Head of caudate nucleus (tissue), 42 donors: ENCODE measurements at regions of chr7 and their contacts with region 1.

Region 1: GRCh38 chr7:71372991-71373390 is 241.0 kb downstream of the GALNT17 start:
- DNase-seq: no peak

Region 2: DNA sequence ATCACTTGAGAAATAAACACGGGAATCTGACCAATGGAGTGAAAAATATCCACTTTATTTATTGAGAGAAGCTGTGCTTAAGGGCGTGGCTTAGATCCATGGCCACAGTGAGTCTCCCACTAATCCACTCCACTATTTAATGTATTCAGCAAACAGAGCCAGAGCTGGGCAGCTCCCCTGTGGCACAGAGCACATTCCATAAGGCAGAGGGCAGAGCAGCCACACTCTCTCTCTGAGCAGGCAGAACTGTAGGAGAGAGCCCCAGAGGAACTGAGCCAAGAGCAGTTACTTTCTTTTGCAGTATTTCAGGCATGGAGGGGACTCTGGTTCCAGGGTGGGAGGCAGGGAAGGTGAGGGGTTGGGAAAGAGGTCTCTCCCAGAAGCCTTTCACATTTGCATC is 135.0 kb before region 1 on chr7:
- intact Hi-C with region 1: loop called (anchors 10 kb)
- DNase-seq: no peak